ENCODE measurements at regions of chr4 and their contacts with region 1.

Region 1: GRCh38 chr4:83639849-83640493 is 104.1 kb downstream of the GPAT3 start:
- DNase-seq: peak in 1 of 2 donors; percentile 68
- ATAC-seq: peak; percentile 42 to 89 (median 86)
- H3K4me3 ChIP-seq: no peak overlapping the region
- H3K27ac ChIP-seq: no peak overlapping the region
- H3K4me1 ChIP-seq: peaks cover 0 to 3% (median 0%) of the 10 kb centered on the region in 9 donors
- H3K27me3 ChIP-seq: no peaks in the 10 kb centered on the region
- CTCF ChIP-seq: peak; percentile 73 to 88 (median 83)

Region 2: GRCh38 chr4:83284193-83285054 is 355.5 kb before region 1 on chr4 and contains the start of gene COQ2:
- intact Hi-C with region 1: loop called in 1 of 10 experiments (anchors 5 kb)
- DNase-seq: peak; percentile 96 to 97
- ATAC-seq: peak; percentile 96 to 99 (median 98)
- H3K4me3 ChIP-seq: peak within 1 kb of the TSS; percentile 45 to 81 (median 67)
- H3K27ac ChIP-seq: peak within 1 kb of the TSS; percentile 91 to 99 (median 96)
- H3K4me1 ChIP-seq: peaks cover 0 to 36% (median 10%) of the 10 kb centered on the region in 9 donors
- H3K27me3 ChIP-seq: no peaks in the 10 kb centered on the region
- CTCF ChIP-seq: peak; percentile 14 to 65 (median 36)
- total RNA-seq, gene COQ2: 17.8 to 32.8 (median 26.5) TPM

Region 3: DNA sequence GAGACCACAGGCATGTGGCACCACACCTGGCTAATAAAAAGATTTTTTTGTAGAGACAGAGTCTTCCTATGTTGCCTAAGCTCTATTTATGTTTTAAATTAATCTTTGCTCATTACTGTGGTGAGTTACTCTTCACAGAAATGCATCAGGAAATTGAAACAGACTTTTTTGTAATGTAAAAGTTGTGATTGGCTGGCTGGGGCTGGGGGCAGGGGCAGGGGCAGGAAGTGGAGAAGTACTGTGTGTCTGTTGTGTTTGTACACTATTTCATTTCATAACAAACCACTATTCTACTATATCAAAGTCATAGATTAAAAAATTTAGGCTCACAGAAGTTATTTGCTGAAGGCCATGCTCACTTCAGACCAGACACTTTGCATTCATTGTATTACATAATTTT is 136.0 kb before region 1 on chr4:
- intact Hi-C with region 1: loop called in 9 of 10 experiments (anchors 1 to 5 kb)
- DNase-seq: no peak
- ATAC-seq: no peak
- H3K4me3 ChIP-seq: no peak overlapping the region
- H3K27ac ChIP-seq: no peak overlapping the region
- H3K4me1 ChIP-seq: no peaks in the 10 kb centered on the region
- H3K27me3 ChIP-seq: no peaks in the 10 kb centered on the region
- CTCF ChIP-seq: no peak

Region 4: DNA sequence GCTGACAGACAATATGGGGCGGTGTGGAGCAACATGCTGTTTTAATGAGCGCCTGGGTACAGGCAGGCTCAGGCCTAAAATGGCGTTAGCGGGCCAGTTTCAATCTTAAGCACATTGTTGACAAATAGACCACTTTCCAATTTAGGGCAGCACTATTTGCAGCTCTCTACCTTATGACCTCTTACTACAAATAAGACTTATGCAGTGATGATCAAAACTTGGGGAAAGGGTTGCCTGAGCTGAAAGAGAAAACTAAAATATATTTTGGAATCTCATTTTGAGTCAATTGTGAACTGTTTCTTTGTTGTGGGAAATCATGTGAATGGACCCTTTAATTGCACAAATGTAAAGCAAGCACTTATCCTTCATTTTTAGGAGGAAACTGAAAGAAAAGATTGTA is 129.5 kb before region 1 on chr4:
- intact Hi-C with region 1: loop called (anchors 1 to 5 kb)
- DNase-seq: no peak
- ATAC-seq: no peak
- H3K4me3 ChIP-seq: no peak overlapping the region
- H3K27ac ChIP-seq: no peak overlapping the region
- H3K4me1 ChIP-seq: no peaks in the 10 kb centered on the region
- H3K27me3 ChIP-seq: no peaks in the 10 kb centered on the region
- CTCF ChIP-seq: no peak

Region 5: DNA sequence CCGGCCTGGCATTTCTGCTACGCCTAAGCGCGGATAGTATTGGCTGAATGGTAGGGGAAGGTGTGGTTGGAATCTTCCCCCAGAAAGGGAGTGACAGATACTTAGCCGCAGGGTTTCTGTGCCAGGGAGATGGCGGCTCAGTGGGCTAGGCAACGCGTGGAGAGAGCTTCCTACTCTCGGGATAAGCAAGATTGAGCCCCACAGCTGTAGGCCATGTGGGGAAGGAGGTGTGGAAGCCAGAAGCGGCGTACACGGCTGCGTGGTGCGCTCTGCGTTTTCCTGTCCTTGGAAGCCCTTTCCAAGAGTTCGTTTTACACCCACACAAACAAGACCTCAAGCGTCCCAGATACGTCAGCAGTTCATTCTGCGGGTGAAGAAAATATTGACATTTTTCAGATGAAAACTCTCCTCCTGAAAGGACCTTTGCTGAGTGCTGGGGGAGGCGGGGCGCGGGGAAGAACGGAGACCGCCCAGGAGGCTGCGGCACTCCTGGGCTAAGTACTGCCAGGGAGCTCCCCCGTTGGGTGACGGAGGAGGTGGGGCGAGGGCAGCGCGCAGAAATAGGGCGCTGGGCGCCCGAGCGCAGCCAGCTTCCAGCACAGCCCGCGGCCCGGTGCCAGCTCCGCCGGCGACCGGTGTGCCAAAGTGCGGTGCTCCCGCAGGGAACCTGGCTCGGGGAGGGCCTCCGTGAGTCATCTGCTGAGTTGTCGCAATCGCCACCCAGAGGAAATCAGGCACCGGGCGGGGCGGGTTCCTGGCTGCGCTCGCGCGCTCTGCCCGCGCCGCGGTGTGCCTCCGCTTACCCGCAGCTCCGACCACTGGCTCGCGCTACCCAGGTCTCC is 104.2 kb before region 1 on chr4 and contains the start of gene GPAT3:
- intact Hi-C with region 1: no loop called
- DNase-seq: peak; percentile 77 to 84
- ATAC-seq: peak; percentile 83 to 96 (median 89)
- H3K4me3 ChIP-seq: peak within 1 kb of the TSS; percentile 51 to 86 (median 74)
- H3K27ac ChIP-seq: peak within 1 kb of the TSS; percentile 68 to 96 (median 90)
- H3K4me1 ChIP-seq: peaks cover 0 to 31% (median 13%) of the 10 kb centered on the region in 9 donors
- H3K27me3 ChIP-seq: peaks cover 0 to 35% (median 6%) of the 10 kb centered on the region in 7 donors
- CTCF ChIP-seq: no peak
- total RNA-seq, gene GPAT3: 34.2 to 82.6 (median 52.8) TPM

Region 6: DNA sequence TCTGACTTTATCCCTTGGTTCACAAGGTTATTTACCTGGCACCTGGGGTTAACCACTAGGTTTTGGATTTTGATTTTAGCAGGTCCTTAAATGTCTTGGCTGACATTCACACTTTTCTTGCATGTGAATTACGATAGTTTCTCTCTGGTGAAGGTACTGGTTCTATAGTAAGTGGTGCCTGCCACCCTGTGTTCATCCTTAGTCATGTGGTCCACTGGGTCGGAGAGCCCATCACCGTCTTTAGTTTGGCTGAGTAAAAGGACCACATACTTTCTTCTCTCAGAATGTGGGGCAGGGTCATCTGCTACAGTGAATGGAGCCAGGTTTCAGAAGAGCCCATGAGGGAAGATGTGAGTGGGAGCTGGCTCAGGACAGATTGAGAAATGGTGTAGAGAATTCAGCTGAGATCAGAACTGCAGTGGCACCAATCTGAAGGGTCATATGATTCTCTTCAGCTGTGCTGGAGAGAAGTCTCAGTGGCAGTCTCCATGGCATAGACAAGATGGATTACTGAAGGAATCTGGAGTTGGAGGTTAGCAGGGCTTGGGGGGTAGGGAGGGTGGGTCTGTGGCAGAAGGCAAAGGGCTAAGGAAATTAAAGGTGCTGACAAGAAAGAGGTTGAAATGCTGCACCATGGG is 206.3 kb after region 1 on chr4:
- intact Hi-C with region 1: loop called in 1 of 10 experiments (anchors 10 kb)
- DNase-seq: no peak
- ATAC-seq: peak in 1 of 8 donors; percentile 86
- H3K4me3 ChIP-seq: no peak overlapping the region
- H3K27ac ChIP-seq: no peak overlapping the region
- H3K4me1 ChIP-seq: no peaks in the 10 kb centered on the region
- H3K27me3 ChIP-seq: peaks cover 0 to 9% (median 0%) of the 10 kb centered on the region in 7 donors
- CTCF ChIP-seq: no peak

Region 7: GRCh38 chr4:84503495-84504437 is 863.8 kb after region 1 on chr4:
- intact Hi-C with region 1: loop called in 8 of 10 experiments (anchors 5 to 10 kb)
- DNase-seq: peak in 1 of 2 donors; percentile 23
- ATAC-seq: peak in 6 of 8 donors; percentile 58 to 80 (median 70)
- H3K4me3 ChIP-seq: no peak overlapping the region
- H3K27ac ChIP-seq: no peak overlapping the region
- H3K4me1 ChIP-seq: peaks cover under 1 to 16% (median 12%) of the 10 kb centered on the region in 9 donors
- H3K27me3 ChIP-seq: peaks cover 31 to 100% (median 100%) of the 10 kb centered on the region in 7 donors
- CTCF ChIP-seq: peak in 8 of 9 donors; percentile 15 to 71 (median 60)

Measured in heart right ventricle (tissue), 16 donors.